ENCODE measurements at regions of chr6 and their contacts with region 1.

Region 1: GRCh38 chr6:122839477-122839876 is 50.4 kb downstream of the SMPDL3A start:
- DNase-seq: peak; percentile 89
- H3K4me3 ChIP-seq: peak overlapping the region; percentile 2
- H3K27ac ChIP-seq: no peak overlapping the region
- H3K4me1 ChIP-seq: peaks cover 27% of the 10 kb centered on the region
- H3K27me3 ChIP-seq: no peaks in the 10 kb centered on the region
- CTCF ChIP-seq: peak; percentile 78

Region 2: GRCh38 chr6:122491919-122492555 is 347.4 kb before region 1 on chr6:
- CTCF ChIA-PET with region 1: interaction called, 9 read pairs
- POLR2A ChIA-PET with region 1: no interaction called
- intact Hi-C with region 1: loop called (anchors 1 kb)
- DNase-seq: peak; percentile 89
- H3K4me3 ChIP-seq: no peak overlapping the region
- H3K27ac ChIP-seq: no peak overlapping the region
- H3K4me1 ChIP-seq: no peaks in the 10 kb centered on the region
- H3K27me3 ChIP-seq: no peaks in the 10 kb centered on the region
- CTCF ChIP-seq: peak; percentile 96

Region 3: GRCh38 chr6:122730775-122731386 is 108.6 kb before region 1 on chr6:
- CTCF ChIA-PET with region 1: interaction called, 27 read pairs
- POLR2A ChIA-PET with region 1: no interaction called
- intact Hi-C with region 1: loop called (anchors 1 kb)
- DNase-seq: peak; percentile 81
- H3K4me3 ChIP-seq: no peak overlapping the region
- H3K27ac ChIP-seq: no peak overlapping the region
- H3K4me1 ChIP-seq: peaks cover 39% of the 10 kb centered on the region
- H3K27me3 ChIP-seq: no peaks in the 10 kb centered on the region
- CTCF ChIP-seq: peak; percentile 82

Region 4: GRCh38 chr6:122789182-122790027 is 50.1 kb before region 1 on chr6 and contains the start of gene SMPDL3A:
- CTCF ChIA-PET with region 1: no interaction called
- POLR2A ChIA-PET with region 1: no interaction called
- intact Hi-C with region 1: loop called (anchors 2 kb)
- DNase-seq: peak; percentile 64
- H3K4me3 ChIP-seq: peak within 1 kb of the TSS; percentile 75
- H3K27ac ChIP-seq: peak within 1 kb of the TSS; percentile 86
- H3K4me1 ChIP-seq: peaks cover 23% of the 10 kb centered on the region
- H3K27me3 ChIP-seq: no peaks in the 10 kb centered on the region
- CTCF ChIP-seq: peak; percentile 68
- total RNA-seq, gene SMPDL3A: 10.3 and 12.4 TPM in 2 replicates

Region 5: DNA sequence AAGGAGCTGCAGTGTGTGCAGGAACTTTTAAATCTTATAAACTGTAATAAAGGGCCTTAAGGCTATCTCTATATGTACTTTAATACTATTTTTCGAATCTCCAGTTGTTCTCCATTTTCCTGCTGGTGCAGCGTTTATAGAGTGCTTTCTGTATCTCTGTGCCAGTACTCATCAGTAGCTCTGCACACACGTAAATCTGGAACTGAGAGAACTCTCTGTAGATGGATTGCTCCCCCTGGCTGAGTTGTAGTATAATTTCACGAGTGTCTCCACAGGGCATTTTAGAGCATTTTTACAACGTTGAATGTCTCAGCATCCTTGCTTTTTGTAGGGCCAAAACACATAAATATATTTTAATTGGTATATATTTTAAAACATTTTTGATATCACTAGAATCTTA is 540.8 kb after region 1 on chr6:
- CTCF ChIA-PET with region 1: interaction called, 10 read pairs
- POLR2A ChIA-PET with region 1: no interaction called
- intact Hi-C with region 1: no loop called
- DNase-seq: peak; percentile 94
- H3K4me3 ChIP-seq: peak overlapping the region; percentile 20
- H3K27ac ChIP-seq: peak overlapping the region; percentile 67
- H3K4me1 ChIP-seq: peaks cover 40% of the 10 kb centered on the region
- H3K27me3 ChIP-seq: no peaks in the 10 kb centered on the region
- CTCF ChIP-seq: peak; percentile 76

Measured in A673 (cell line).